Activated naive CD4-positive, alpha-beta T cell treated with anti-CD3 and anti-CD28 coated beads for 36 hours (primary cell): ENCODE measurements at regions of chr16 and their contacts with region 1.

Region 1: DNA sequence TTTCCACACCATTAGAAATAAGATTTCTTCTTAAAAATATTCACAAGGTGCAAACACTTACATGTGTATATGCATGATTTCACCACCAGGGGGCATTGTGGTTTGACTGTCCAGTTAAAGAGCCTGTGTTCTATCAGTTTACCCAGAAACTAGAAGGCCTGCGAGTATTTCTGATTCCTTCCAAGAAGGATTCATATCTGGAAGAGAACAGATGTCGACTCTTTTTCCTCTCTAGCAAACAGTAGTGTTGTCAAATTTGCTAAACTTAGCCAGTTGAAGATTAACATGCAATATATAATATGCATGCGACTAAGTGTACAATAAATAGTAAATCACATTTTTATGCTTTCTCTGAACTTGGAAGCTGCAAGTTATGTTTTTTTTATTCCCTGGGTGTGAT is 404.1 kb downstream of the WWOX start:
- DNase-seq: peak; percentile 71
- H3K4me3 Mint-ChIP-seq: no peak overlapping the region
- H3K27ac Mint-ChIP-seq: no peak overlapping the region
- H3K4me1 Mint-ChIP-seq: no peaks in the 10 kb centered on the region
- H3K27me3 Mint-ChIP-seq: no peaks in the 10 kb centered on the region

Region 2: DNA sequence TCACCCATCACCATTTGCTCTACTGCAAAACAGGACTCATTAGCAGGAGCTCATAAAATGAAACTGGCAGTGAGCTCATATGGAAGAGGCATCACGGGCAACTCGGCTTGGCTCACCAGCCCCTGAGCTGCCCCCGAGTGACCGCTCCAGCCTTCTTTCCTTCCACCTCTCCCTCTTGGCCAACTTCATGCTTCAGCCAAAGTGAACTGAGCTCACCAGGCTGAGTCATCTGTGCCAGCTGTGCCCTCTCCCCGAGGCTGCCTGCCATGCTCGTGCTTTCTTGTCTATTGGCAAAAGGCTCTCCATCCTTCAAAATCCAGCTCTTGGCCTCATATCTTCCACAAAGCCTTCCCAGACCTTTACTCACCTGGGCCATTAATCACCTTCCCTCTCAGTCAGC is 12.8 kb before region 1 on chr16:
- CTCF ChIA-PET with region 1: no interaction called
- intact Hi-C with region 1: no loop called
- DNase-seq: no peak
- H3K4me3 Mint-ChIP-seq: no peak overlapping the region
- H3K27ac Mint-ChIP-seq: no peak overlapping the region
- H3K4me1 Mint-ChIP-seq: no peaks in the 10 kb centered on the region
- H3K27me3 Mint-ChIP-seq: no peaks in the 10 kb centered on the region

Region 3: GRCh38 chr16:78563905-78564304 is 60.3 kb after region 1 on chr16:
- CTCF ChIA-PET with region 1: no interaction called
- intact Hi-C with region 1: no loop called
- DNase-seq: no peak
- H3K4me3 Mint-ChIP-seq: no peak overlapping the region
- H3K27ac Mint-ChIP-seq: no peak overlapping the region
- H3K4me1 Mint-ChIP-seq: peaks cover 11% of the 10 kb centered on the region
- H3K27me3 Mint-ChIP-seq: no peaks in the 10 kb centered on the region

Region 4: DNA sequence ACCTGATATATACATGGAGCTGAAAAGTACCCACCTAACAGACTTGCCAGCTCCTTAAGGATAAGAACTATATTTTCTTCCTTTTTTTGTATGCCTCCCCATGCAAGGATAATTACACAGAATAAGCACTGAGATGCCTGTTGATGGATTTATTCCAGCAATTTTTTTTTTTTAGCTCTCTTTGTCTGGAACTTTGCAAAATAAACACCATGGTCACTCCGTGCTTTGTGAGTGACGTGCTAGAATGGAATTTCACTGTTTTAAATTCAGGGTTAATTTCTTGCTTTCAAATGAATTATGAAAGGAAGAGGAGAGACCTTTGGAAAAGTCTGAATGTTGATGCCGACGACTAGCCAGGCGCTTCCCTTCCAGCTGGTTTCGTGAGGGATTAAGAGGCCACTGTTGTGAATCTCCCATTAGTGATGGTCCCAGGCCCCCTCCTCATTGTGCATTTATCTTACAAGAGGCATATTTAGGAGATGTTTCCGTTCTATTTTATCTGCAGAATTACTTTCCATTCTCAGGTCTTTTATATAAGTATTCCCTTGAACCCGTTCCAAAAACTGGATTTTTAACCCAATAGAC is 125.0 kb after region 1 on chr16:
- CTCF ChIA-PET with region 1: no interaction called
- intact Hi-C with region 1: no loop called
- DNase-seq: no peak
- H3K4me3 Mint-ChIP-seq: no peak overlapping the region
- H3K27ac Mint-ChIP-seq: no peak overlapping the region
- H3K4me1 Mint-ChIP-seq: no peaks in the 10 kb centered on the region
- H3K27me3 Mint-ChIP-seq: no peaks in the 10 kb centered on the region

Region 5: DNA sequence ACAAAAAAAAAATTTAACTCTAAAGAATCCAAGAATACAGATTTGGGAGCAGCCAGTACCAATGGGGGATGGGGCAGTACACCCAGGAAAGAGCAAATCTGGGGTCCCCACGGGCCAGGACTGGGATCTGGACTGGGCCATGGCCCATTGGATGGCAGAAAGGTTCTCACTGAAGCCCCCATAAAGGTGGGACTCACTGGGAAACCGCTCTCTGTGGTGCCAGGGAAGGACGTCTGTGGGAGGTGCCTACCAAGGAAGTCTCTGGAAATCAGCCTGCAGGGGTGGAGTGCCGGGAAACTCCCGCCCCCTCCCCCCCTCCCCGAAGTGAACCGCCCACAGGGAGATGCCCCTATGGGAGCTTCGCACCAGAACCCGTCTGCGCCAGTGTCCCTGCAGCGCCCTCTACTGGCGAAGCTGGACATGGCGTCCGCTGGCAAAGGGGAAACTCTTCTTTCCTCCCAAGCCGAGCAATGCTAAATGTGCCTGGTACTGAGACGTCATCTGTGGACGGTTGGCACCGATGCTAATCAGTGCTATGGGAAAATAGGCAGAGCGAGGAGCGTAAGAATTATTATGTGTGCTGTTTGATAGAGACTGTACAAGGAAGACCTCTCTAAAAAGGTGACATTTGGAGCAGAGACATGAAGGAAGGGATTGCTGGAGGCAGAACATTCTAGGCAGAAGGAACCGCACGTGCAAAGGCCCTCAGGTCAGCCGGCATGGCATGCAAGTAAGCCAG is 266.9 kb after region 1 on chr16:
- CTCF ChIA-PET with region 1: interaction called, 7 read pairs
- intact Hi-C with region 1: loop called (anchors 1 kb)
- DNase-seq: peak; percentile 84
- H3K4me3 Mint-ChIP-seq: no peak overlapping the region
- H3K27ac Mint-ChIP-seq: no peak overlapping the region
- H3K4me1 Mint-ChIP-seq: peaks cover 18% of the 10 kb centered on the region
- H3K27me3 Mint-ChIP-seq: no peaks in the 10 kb centered on the region